MCF 10A (cell line): ENCODE measurements at regions of chr13 and their contacts with region 1.

Region 1: DNA sequence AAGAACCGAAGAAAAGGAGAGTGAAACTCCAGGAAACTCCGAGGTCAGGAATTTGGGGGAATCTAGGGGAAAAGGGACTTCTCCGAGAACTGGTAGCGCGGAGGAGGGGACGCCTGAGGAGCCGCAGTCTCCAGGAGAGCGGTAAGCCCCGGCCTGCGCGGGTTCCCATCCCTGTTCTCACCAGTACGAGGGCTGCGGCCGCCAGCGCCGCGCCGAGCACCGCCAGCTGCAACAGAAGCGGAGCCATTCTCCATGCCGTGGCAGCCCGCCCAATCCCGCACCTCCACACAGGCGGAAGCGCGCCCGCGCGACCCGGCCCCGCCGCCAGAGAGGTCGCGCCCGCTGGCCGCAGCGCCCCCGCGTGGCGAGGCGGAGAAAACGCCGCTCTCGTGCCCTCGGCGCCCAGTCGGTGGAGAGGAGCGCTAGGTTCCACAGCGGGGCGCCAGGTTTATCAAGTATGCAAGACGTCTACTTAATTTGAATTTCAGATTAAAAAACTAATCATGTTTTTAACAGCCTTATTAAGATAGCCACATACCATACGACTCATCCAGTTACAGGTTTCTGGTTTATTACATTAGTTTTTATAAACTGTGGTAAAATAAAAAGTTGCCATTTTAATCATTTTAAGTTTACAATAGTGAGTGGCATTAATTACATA is at the start of gene ALG5:
- DNase-seq: peak; percentile 87
- H3K4me3 Mint-ChIP-seq: peak within 1 kb of the TSS; percentile 98
- H3K27ac Mint-ChIP-seq: peak within 1 kb of the TSS; percentile 96
- H3K4me1 Mint-ChIP-seq: peaks cover 31% of the 10 kb centered on the region
- H3K27me3 Mint-ChIP-seq: no peaks in the 10 kb centered on the region
- CTCF ChIP-seq: peak; percentile 91
- total RNA-seq, gene ALG5: 43.7 and 51.2 TPM in 2 replicates

Region 2: DNA sequence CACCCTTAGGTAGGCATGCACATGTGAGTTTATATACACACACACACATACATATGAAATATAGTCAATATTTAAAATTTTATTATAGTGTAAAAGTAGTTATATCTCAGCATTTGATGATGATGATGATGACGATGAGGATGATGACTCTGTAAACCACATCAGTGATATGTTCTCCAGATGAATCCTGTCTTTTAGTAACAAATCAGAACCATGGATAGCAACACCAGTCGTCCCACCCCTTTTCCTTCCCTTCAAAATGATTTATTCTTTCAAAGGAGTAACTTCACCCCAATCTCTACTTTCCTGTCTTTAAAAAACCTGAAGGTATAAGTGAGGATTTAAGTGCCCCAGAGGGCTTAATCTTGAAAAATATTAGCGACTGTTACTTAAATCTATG is 942.2 kb before region 1 on chr13:
- CTCF ChIA-PET with region 1: no interaction called
- POLR2A ChIA-PET with region 1: no interaction called
- intact Hi-C with region 1: no loop called
- DNase-seq: peak; percentile 27
- H3K4me3 Mint-ChIP-seq: no peak overlapping the region
- H3K27ac Mint-ChIP-seq: no peak overlapping the region
- H3K4me1 Mint-ChIP-seq: no peaks in the 10 kb centered on the region
- H3K27me3 Mint-ChIP-seq: peaks cover 44% of the 10 kb centered on the region
- CTCF ChIP-seq: no peak

Region 3: DNA sequence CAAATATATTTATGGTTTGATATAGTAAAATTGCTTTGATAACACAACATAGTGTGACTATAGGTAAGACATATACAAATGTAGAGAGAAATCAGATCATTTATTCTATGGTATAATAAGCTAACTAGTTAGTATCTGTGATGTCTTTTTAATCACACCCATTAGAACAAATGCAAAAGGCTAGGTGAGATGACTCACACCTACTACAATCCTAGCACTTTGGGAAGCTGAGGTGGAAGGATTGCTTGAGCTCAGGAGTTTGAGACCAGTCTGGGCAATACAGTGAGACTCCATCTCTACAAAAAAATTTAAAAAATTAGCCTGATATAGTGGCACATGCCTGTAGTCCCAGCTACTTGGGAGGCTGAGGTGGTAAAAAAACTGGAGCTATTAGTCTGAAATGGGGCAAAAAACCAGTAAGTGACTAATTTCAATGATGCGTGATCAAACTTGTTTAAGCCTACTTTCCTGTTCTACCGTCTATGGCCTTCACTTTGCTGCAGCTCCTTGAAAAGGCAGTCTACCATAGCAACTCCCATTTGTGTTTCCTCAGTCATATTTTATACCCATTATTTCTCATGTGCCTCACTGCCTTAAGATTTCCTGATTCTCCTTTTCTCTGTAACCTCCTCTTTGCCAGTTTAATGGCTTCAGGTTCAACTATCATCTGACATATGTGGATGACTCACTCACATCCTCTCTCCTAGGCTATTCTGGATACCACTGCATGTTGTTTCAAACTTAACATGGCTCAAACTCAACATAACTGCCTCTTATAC is 12.5 kb before region 1 on chr13:
- CTCF ChIA-PET with region 1: interaction called, 4 read pairs
- POLR2A ChIA-PET with region 1: interaction called, 18 read pairs
- intact Hi-C with region 1: no loop called
- DNase-seq: peak; percentile 27
- H3K4me3 Mint-ChIP-seq: no peak overlapping the region
- H3K27ac Mint-ChIP-seq: no peak overlapping the region
- H3K4me1 Mint-ChIP-seq: peaks cover 16% of the 10 kb centered on the region
- H3K27me3 Mint-ChIP-seq: no peaks in the 10 kb centered on the region
- CTCF ChIP-seq: no peak

Region 4: DNA sequence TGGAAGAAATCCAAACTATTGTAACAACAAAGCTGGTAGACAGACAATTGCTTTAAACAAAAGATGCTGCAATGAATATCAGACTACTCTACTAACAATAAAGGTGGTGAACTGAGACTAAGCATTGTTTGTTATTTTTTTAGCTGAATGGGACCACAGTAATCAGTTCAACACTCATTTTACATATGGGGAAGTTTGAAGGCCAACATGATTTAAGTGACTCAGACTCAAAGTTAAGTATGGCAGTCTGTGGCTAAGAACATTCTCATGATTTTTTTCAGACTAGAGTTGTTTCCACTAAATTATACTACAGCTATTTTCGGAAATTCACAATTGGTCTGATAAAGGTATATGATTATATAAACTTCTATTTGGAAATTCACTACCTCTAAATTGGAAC is 11.8 kb after region 1 on chr13:
- CTCF ChIA-PET with region 1: interaction called, 7 read pairs
- POLR2A ChIA-PET with region 1: interaction called, 33 read pairs
- intact Hi-C with region 1: no loop called
- DNase-seq: no peak
- H3K4me3 Mint-ChIP-seq: no peak overlapping the region
- H3K27ac Mint-ChIP-seq: no peak overlapping the region
- H3K4me1 Mint-ChIP-seq: peaks cover 13% of the 10 kb centered on the region
- H3K27me3 Mint-ChIP-seq: no peaks in the 10 kb centered on the region
- CTCF ChIP-seq: no peak

Region 5: GRCh38 chr13:37023871-37024270 is 24.7 kb after region 1 on chr13:
- CTCF ChIA-PET with region 1: interaction called, 3 read pairs
- POLR2A ChIA-PET with region 1: interaction called, 14 read pairs
- intact Hi-C with region 1: no loop called
- DNase-seq: peak; percentile 9
- H3K4me3 Mint-ChIP-seq: no peak overlapping the region
- H3K27ac Mint-ChIP-seq: peak overlapping the region; percentile 10
- H3K4me1 Mint-ChIP-seq: peaks cover 6% of the 10 kb centered on the region
- H3K27me3 Mint-ChIP-seq: no peaks in the 10 kb centered on the region
- CTCF ChIP-seq: no peak

Region 6: DNA sequence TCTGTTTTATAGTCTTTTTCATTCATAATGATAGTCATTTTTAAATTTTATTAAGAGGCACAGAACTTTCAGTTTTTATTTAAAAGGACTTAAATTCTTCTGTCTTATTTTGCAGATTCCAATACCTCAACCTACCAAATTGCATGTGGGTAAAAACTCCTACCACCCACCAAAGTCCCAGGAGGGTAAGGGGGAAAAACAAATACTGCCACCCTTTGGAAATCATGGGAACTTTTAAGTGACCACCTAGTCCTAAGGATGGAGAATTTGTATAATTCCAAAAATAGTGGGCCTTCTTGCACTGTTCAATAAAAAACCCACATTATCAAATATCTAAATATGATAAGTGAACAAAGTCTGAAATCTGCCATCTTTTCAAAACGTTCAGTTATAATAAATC is 50.6 kb after region 1 on chr13:
- CTCF ChIA-PET with region 1: no interaction called
- POLR2A ChIA-PET with region 1: interaction called, 14 read pairs
- intact Hi-C with region 1: no loop called
- DNase-seq: no peak
- H3K4me3 Mint-ChIP-seq: no peak overlapping the region
- H3K27ac Mint-ChIP-seq: no peak overlapping the region
- H3K4me1 Mint-ChIP-seq: peaks cover 6% of the 10 kb centered on the region
- H3K27me3 Mint-ChIP-seq: no peaks in the 10 kb centered on the region
- CTCF ChIP-seq: no peak

Region 7: DNA sequence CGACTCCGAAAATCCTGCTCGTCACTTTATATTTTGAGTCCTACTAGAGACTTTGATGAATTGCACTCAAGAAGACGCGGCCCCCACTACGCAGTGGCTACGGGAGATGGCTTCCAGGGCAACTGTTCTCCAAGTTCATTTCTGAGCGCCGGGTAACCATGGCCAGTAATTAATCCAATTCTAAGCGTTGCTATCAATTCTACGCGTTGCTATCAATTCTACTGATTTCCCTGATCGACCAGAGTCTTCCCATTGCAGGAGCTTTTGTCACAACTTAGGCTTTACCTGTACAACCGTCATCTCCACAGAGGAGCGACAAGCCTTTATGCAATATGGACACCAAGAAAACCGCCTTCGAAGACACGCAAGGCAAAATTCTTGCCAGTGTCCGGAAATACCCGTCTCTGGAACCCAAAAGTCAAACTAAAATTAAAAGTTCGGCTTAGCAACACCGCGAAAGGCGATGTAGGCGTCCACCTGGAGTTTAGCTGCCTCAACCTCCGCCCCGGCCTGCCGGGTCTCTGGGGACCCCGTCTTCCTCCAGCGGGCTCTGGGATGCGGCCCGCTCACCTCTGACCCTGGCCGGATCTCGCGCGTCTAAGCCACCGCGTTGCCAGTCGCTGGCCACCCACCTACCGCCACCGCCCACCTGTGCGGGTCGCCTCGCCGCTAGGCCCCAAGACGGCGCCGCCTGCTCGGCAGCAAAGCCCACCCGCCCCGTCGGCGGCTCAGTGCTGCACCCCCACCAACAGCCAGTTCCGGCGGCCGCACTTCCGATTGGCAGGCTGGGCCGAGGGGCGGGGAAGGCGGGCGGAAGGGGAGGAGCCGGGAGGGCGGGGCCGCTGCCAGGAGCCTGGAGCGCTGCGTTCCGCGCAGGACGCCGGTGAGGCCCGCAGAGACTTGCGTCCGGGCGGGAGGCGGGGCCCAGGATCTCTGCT is 60.0 kb after region 1 on chr13 and contains the start of gene SUPT20H:
- CTCF ChIA-PET with region 1: no interaction called
- POLR2A ChIA-PET with region 1: interaction called, 17 read pairs
- intact Hi-C with region 1: loop called (anchors 2 kb)
- DNase-seq: peak; percentile 89
- H3K4me3 Mint-ChIP-seq: peak within 1 kb of the TSS; percentile 81
- H3K27ac Mint-ChIP-seq: peak within 1 kb of the TSS; percentile 97
- H3K4me1 Mint-ChIP-seq: peaks cover 4% of the 10 kb centered on the region
- H3K27me3 Mint-ChIP-seq: no peaks in the 10 kb centered on the region
- CTCF ChIP-seq: no peak
- total RNA-seq, gene SUPT20H: 86.8 and 90.3 TPM in 2 replicates